PC-3 (cell line): ENCODE measurements at regions of chr5 and their contacts with region 1.

Region 1: DNA sequence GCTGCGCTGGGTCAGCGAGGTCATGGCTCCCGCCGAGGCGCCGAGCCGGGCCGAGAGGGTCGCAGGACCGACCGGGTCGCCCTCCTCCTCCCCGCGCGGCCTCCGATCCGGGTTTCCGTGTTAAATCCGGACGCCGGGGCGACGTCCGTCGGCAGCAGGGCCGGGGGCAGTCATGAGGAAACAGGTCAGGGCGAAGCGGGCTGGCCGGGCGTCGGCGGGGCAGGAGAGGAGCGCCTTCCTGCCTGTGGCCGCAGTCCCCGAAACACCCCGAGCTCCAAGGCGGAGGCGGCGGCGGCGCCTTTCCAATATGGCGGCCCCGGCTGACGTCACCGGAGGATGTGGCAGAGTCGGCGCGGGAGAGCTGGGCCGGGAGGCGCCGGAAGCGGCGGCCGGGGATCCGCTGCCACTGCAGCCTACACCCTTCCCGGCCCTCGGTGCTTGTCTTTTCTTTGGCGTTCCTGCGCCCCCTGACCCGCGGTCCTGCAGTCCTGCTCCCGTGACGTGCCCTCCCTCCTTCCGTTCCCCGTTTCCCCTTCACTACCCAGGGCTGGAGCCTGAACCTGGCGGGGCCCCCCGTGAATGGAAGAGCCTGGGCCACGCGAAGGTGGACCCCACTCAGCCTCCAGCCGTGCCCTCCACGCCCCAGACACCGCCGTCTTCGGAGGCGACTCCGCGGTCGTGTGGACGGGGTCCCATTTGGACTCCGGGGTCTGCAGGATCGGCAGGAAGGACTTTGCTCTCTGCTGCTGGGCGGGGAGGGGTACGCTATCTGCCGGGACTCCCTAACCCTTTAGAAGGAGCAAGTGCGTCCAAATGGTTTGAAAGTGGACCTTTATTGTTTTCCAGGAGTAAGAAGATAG is at the start of gene GOLPH3:
- DNase-seq: peak; percentile 92
- ATAC-seq: peak; percentile 79
- H3K4me3 ChIP-seq: peak within 1 kb of the TSS; percentile 74
- H3K27ac ChIP-seq: peak within 1 kb of the TSS; percentile 81
- H3K4me1 ChIP-seq: peaks cover 25% of the 10 kb centered on the region
- H3K27me3 ChIP-seq: no peaks in the 10 kb centered on the region
- CTCF ChIP-seq: no peak
- total RNA-seq, gene GOLPH3: 46.2 and 55.5 TPM in 2 replicates

Region 2: GRCh38 chr5:31671339-31671741 is 502.9 kb before region 1 on chr5:
- CTCF ChIA-PET with region 1: no interaction called
- POLR2A ChIA-PET with region 1: no interaction called
- intact Hi-C with region 1: no loop called
- DNase-seq: no peak
- ATAC-seq: no peak
- H3K4me3 ChIP-seq: no peak overlapping the region
- H3K27ac ChIP-seq: no peak overlapping the region
- H3K4me1 ChIP-seq: no peaks in the 10 kb centered on the region
- H3K27me3 ChIP-seq: peaks cover 71% of the 10 kb centered on the region
- CTCF ChIP-seq: no peak

Region 3: DNA sequence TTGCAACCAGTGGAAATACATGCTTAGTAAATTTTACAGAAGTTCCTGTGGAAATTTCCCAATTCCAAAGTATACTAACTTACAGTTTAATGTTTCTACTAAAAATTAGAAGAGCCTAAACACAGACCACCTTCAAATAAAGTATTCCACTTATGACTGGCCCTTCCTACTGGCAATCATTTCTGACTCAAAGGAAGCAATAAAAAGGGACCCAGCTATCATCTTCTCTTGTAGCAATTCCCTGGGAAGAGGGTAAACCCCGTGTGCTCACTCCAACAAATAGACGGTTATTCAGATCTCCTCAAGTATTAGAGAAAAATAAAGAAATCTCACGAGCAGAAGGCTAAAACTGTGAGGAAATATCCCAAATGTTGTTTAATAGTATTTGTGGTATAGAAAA is 43.4 kb before region 1 on chr5:
- CTCF ChIA-PET with region 1: interaction called, 7 read pairs
- POLR2A ChIA-PET with region 1: no interaction called
- intact Hi-C with region 1: loop called (anchors 5 kb)
- DNase-seq: peak; percentile 33
- ATAC-seq: peak; percentile 56
- H3K4me3 ChIP-seq: no peak overlapping the region
- H3K27ac ChIP-seq: no peak overlapping the region
- H3K4me1 ChIP-seq: no peaks in the 10 kb centered on the region
- H3K27me3 ChIP-seq: no peaks in the 10 kb centered on the region
- CTCF ChIP-seq: no peak

Region 4: DNA sequence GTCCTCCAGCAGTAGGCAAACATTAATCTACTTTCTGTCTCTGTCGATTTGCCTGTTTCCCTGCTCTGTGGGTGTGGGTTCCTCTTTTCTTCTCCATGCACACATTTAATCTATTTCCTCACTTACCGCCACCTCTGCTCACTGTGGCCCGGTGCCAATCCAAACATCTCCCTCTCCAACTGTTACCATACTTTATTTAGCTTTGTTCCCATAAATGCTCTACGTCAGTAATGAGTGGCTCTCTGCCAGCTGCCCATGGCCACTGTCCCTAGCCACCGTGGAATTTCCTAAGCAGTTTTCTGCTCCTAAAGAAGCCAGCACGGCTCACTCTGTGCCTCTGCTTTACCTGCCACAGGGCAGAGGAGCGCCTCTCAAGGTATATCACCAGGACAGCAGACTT is 19.4 kb after region 1 on chr5:
- CTCF ChIA-PET with region 1: no interaction called
- POLR2A ChIA-PET with region 1: interaction called, 7 read pairs
- intact Hi-C with region 1: loop called (anchors 2 kb)
- DNase-seq: peak; percentile 85
- ATAC-seq: peak; percentile 89
- H3K4me3 ChIP-seq: peak overlapping the region; percentile 52
- H3K27ac ChIP-seq: no peak overlapping the region
- H3K4me1 ChIP-seq: peaks cover 10% of the 10 kb centered on the region; the same call in 1 of the 2 replicates
- H3K27me3 ChIP-seq: no peaks in the 10 kb centered on the region
- CTCF ChIP-seq: no peak

Region 5: GRCh38 chr5:32312647-32313523 is 138.6 kb after region 1 on chr5 and contains the start of gene MTMR12:
- CTCF ChIA-PET with region 1: no interaction called
- POLR2A ChIA-PET with region 1: no interaction called
- intact Hi-C with region 1: loop called (anchors 2 kb)
- DNase-seq: peak; percentile 99
- ATAC-seq: peak; percentile 94
- H3K4me3 ChIP-seq: peak within 1 kb of the TSS; percentile 76
- H3K27ac ChIP-seq: peak within 1 kb of the TSS; percentile 31; the same call in 1 of the 2 replicates
- H3K4me1 ChIP-seq: peaks cover 9% of the 10 kb centered on the region; the same call in 1 of the 2 replicates
- H3K27me3 ChIP-seq: no peaks in the 10 kb centered on the region
- CTCF ChIP-seq: no peak
- total RNA-seq, gene MTMR12: 14.5 and 16.0 TPM in 2 replicates

Region 6: DNA sequence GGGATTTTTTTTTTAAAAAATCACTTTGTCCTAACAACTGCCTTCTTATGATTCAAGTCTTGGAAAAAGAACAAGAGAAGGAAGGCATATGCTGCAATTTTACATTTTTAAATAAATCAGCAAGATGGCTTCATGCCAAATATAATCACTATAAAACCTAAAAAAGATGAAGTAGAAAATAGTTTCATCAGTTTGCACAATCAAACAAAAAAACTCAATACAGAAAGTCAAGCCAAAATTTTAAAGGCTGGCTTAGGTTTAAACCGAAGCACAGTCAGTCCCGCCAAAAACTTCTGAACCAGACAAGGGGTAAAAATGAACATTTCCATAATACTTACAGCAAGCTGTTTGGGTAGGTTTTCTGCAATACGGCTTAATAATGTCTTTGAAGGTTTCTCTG is 213.0 kb after region 1 on chr5:
- CTCF ChIA-PET with region 1: no interaction called
- POLR2A ChIA-PET with region 1: no interaction called
- intact Hi-C with region 1: no loop called
- DNase-seq: no peak
- ATAC-seq: no peak
- H3K4me3 ChIP-seq: no peak overlapping the region
- H3K27ac ChIP-seq: no peak overlapping the region
- H3K4me1 ChIP-seq: no peaks in the 10 kb centered on the region
- H3K27me3 ChIP-seq: no peaks in the 10 kb centered on the region
- CTCF ChIP-seq: no peak